ENCODE measurements at regions of chr20 and their contacts with region 1.

Region 1: DNA sequence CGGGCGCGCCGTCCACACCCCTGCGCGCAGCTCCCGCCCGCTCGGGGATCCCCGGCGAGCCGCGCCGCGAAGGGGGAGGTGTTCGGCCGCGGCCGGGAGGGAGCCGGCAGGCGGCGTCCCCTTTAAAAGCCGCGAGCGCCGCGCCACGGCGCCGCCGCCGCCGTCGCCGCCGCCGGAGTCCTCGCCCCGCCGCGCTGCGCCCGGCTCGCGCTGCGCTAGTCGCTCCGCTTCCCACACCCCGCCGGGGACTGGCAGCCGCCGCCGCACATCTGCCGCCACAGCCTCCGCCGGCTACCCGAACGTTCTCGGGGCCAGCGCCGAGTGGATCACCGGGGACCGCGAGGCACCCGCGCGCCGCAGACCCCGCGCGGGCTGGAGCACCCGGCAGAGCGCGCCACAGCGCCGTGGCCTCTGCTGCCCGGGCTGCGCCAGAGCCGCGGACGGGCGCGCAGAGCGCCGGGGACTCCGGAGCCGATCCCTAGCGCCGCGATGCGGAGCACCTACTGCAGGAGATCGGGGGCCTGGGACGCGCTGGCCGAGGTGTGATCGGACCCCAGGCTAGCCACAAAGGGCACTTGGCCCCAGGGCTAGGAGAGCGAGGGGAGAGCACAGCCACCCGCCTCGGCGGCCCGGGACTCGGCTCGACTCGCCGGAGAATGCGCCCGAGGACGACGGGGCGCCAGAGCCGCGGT is at the start of gene BMP2:
- DNase-seq: peak; percentile 41
- H3K4me3 Mint-ChIP-seq: peak within 1 kb of the TSS; percentile 86
- H3K27ac Mint-ChIP-seq: no peak within 1 kb of the TSS
- H3K4me1 Mint-ChIP-seq: peaks cover 20% of the 10 kb centered on the region
- H3K27me3 Mint-ChIP-seq: no peaks in the 10 kb centered on the region
- CTCF ChIP-seq: no peak
- total RNA-seq, gene BMP2: 6.7 and 7.7 TPM in 2 replicates

Region 2: GRCh38 chr20:6178537-6178936 is 589.1 kb before region 1 on chr20:
- CTCF ChIA-PET with region 1: interaction called, 3 read pairs
- POLR2A ChIA-PET with region 1: interaction called, 3 read pairs
- intact Hi-C with region 1: loop called (anchors 5 kb)
- DNase-seq: peak; percentile 50
- H3K4me3 Mint-ChIP-seq: no peak overlapping the region
- H3K27ac Mint-ChIP-seq: no peak overlapping the region
- H3K4me1 Mint-ChIP-seq: no peaks in the 10 kb centered on the region
- H3K27me3 Mint-ChIP-seq: no peaks in the 10 kb centered on the region
- CTCF ChIP-seq: peak; percentile 45

Region 3: DNA sequence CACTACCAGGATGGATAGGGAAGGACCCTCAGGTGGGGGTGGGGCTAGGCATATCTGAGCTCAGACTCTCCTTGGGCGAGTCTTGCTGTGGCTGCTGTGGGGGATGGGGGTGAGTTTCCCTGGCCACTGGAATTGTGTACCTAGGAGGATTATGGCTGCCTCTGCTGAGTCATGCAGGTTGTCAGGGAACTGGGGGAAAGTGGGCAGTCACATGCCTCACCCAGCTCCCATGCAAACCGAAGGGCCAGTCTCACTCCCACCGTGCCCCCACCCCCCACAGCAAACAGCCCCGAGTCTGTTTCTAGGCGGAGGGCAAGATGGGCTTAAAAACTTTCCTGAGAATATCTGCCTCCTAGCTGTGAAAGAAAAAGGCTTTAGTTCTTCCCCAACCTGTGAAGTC is 434.6 kb before region 1 on chr20:
- CTCF ChIA-PET with region 1: no interaction called
- POLR2A ChIA-PET with region 1: no interaction called
- intact Hi-C with region 1: no loop called
- DNase-seq: no peak
- H3K4me3 Mint-ChIP-seq: no peak overlapping the region
- H3K27ac Mint-ChIP-seq: no peak overlapping the region
- H3K4me1 Mint-ChIP-seq: no peaks in the 10 kb centered on the region
- H3K27me3 Mint-ChIP-seq: no peaks in the 10 kb centered on the region
- CTCF ChIP-seq: no peak

Region 4: GRCh38 chr20:6590891-6591631 is 176.6 kb before region 1 on chr20:
- CTCF ChIA-PET with region 1: interaction called, 10 read pairs
- POLR2A ChIA-PET with region 1: no interaction called
- intact Hi-C with region 1: no loop called
- DNase-seq: peak; percentile 98
- H3K4me3 Mint-ChIP-seq: peak overlapping the region; percentile 40
- H3K27ac Mint-ChIP-seq: peak overlapping the region; percentile 95
- H3K4me1 Mint-ChIP-seq: peaks cover 32% of the 10 kb centered on the region
- H3K27me3 Mint-ChIP-seq: no peaks in the 10 kb centered on the region
- CTCF ChIP-seq: no peak

Region 5: DNA sequence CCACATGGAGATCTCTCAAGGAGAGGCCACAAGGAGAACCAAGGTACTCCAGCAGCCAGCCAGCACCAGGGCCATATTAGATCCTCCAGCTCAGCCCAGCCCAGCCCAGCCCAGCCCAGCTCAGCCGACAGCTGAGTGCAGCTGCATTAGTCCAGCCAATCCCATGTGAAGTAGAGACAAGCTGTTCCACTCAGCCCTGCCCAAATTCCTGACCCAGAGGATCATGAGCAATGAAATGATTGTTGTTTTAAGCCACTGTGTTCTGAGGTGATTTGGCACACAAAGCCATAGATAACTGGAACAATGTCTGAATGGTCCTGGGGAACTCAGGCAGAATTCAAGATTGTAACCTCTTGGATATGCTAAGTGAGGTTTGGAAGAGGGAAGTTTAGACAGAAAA is 59.7 kb before region 1 on chr20:
- CTCF ChIA-PET with region 1: interaction called, 14 read pairs
- POLR2A ChIA-PET with region 1: interaction called, 7 read pairs
- intact Hi-C with region 1: no loop called
- DNase-seq: peak; percentile 83
- H3K4me3 Mint-ChIP-seq: peak overlapping the region; percentile 29
- H3K27ac Mint-ChIP-seq: peak overlapping the region; percentile 85
- H3K4me1 Mint-ChIP-seq: peaks cover 67% of the 10 kb centered on the region
- H3K27me3 Mint-ChIP-seq: no peaks in the 10 kb centered on the region
- CTCF ChIP-seq: no peak

Region 6: DNA sequence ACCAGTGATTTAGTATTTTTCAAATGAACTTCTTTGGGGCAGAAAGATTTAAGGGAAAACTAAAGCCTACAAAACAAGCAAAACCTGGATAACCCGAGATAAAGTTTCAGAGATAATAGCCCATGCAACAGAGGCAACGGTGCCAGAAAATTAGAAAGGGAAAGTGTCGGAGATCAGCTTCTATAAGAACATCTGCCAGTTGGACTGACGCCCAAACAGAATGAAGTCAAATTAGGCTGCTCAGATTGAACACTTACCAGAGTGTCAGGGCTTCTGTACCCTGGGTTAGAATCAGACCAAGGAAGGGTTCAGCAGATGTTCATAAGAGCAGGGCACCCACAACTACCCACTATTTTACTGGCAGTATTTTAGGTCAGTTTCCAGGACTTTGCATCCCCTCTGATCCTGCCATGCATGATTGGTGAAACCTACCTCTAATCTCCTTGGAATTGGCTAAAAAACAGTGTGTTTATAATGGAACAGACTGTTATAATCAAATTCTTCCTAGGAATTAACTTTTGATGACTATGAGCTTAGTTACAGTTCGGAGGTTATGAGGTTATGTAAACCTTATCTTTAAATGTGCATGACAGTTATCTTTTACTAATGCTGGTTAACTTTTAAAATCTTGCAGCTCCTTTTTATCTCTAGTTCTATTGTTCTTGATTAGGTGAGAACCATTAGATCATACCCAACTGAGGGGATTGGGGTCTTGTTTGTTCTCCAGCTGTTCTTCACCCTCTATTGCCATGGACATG is 12.9 kb after region 1 on chr20:
- CTCF ChIA-PET with region 1: interaction called, 13 read pairs
- POLR2A ChIA-PET with region 1: interaction called, 6 read pairs
- intact Hi-C with region 1: no loop called
- DNase-seq: no peak
- H3K4me3 Mint-ChIP-seq: no peak overlapping the region
- H3K27ac Mint-ChIP-seq: no peak overlapping the region
- H3K4me1 Mint-ChIP-seq: no peaks in the 10 kb centered on the region
- H3K27me3 Mint-ChIP-seq: no peaks in the 10 kb centered on the region
- CTCF ChIP-seq: no peak

Region 7: GRCh38 chr20:6898928-6899327 is 131.2 kb after region 1 on chr20:
- CTCF ChIA-PET with region 1: no interaction called
- POLR2A ChIA-PET with region 1: no interaction called
- intact Hi-C with region 1: no loop called
- DNase-seq: no peak
- H3K4me3 Mint-ChIP-seq: no peak overlapping the region
- H3K27ac Mint-ChIP-seq: no peak overlapping the region
- H3K4me1 Mint-ChIP-seq: no peaks in the 10 kb centered on the region
- H3K27me3 Mint-ChIP-seq: no peaks in the 10 kb centered on the region
- CTCF ChIP-seq: no peak

Region 8: GRCh38 chr20:7094438-7094997 is 326.8 kb after region 1 on chr20:
- CTCF ChIA-PET with region 1: interaction called, 9 read pairs
- POLR2A ChIA-PET with region 1: no interaction called
- intact Hi-C with region 1: loop called (anchors 1 kb)
- DNase-seq: peak; percentile 65
- H3K4me3 Mint-ChIP-seq: no peak overlapping the region
- H3K27ac Mint-ChIP-seq: no peak overlapping the region
- H3K4me1 Mint-ChIP-seq: no peaks in the 10 kb centered on the region
- H3K27me3 Mint-ChIP-seq: no peaks in the 10 kb centered on the region
- CTCF ChIP-seq: peak; percentile 63

Region 9: GRCh38 chr20:7226156-7226555 is 458.5 kb after region 1 on chr20:
- CTCF ChIA-PET with region 1: no interaction called
- POLR2A ChIA-PET with region 1: no interaction called
- intact Hi-C with region 1: no loop called
- DNase-seq: no peak
- H3K4me3 Mint-ChIP-seq: no peak overlapping the region
- H3K27ac Mint-ChIP-seq: no peak overlapping the region
- H3K4me1 Mint-ChIP-seq: no peaks in the 10 kb centered on the region
- H3K27me3 Mint-ChIP-seq: no peaks in the 10 kb centered on the region
- CTCF ChIP-seq: no peak

Region 10: DNA sequence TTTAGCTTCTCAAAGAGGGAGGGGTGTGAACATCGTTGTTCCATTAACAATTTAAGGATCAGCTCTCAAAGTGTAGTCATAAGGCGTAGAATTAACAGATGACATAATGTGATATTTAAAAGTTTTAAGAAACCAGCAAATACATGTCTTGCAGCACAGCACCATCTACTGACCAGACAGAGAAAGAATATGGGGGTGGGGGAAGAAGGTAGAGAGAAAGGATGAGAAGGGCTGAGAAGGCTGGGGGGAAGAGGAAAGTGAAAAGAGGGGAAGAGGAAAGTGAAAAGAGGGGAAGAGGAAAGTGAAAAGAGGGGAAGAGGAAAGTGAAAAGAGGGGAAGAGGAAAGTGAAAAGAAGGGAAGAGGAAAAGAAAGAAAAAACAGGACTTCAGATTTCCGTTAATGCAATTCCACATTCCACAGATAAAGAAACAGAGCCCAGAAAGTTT is 1091.7 kb after region 1 on chr20:
- CTCF ChIA-PET with region 1: interaction called, 6 read pairs
- POLR2A ChIA-PET with region 1: no interaction called
- intact Hi-C with region 1: loop called (anchors 1 kb)
- DNase-seq: peak; percentile 79
- H3K4me3 Mint-ChIP-seq: no peak overlapping the region
- H3K27ac Mint-ChIP-seq: peak overlapping the region; percentile 23
- H3K4me1 Mint-ChIP-seq: peaks cover 33% of the 10 kb centered on the region
- H3K27me3 Mint-ChIP-seq: no peaks in the 10 kb centered on the region
- CTCF ChIP-seq: peak; percentile 50